HepG2 (cell line): ENCODE measurements at regions of chr3 and their contacts with region 1.

Region 1: DNA sequence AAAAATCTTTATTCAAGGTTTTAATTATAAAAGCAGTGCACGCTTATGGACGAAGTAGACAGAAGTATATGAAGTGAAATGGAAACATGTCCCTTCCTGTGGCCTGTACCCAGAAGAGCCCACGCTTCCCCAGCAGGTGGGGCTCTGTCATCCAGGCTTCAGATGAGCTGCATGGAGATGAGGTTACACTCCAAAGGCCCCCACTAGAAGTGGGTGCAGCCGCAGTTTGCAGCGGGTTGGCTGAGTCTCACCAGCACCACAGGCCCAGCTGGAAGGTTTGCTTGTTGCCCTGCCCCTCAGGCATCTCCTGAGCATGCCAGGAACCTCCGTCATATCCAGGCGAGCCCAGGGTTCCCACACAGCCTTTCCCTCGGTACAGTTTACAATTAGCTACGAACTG is 33.1 kb downstream of the PRR20G start:
- DNase-seq: peak; percentile 16
- ATAC-seq: peak; percentile 95
- H3K4me3 ChIP-seq: no peak overlapping the region
- H3K27ac ChIP-seq: no peak overlapping the region
- H3K4me1 ChIP-seq: no peaks in the 10 kb centered on the region
- H3K27me3 ChIP-seq: peaks cover 3 to 21% of the 10 kb centered on the region in 2 experiments; a peak in 3 of 5 replicates
- CTCF ChIP-seq: peak; percentile 72
- EP300 ChIP-seq: no peak
- POLR2A ChIP-seq: no peak
- RAD21 ChIP-seq: peak; percentile 39; the same call in 1 of the 2 replicates

Region 2: DNA sequence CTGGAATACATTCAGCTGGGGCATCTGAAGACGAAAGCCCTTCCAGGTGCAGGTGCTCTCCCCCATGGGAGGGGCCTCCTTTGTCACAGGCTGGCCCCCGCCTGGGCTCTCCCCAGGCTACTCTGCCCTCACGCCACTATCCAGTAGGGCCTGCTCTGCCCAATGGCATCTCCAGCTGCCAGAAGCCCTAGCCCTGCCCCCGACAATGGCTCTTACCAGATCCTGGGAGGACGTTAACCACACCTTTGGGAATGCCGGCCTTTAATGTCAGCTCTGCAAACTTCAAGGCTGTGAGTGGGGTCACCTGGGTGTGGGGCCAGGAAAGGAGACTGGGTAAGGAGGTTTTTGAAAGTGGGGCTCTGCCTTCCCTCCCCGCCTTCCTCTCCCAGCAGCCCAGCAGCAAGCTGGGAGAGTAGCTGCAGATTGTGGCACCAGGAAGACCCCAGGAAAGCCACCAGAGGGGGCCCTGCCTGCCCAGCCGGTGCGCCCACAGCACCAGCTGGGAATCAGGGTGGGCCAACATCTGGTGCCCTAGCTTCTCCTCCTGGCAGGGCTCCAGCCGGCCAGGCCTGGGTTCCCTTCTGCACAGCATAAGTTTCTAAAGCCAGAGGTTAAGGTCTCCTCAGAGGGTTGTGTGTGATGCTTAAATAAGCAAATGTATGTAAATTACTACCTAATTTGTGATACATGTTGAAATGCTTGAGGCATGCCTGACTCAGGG is 1130.4 kb before region 1 on chr3:
- CTCF ChIA-PET with region 1: no interaction called
- POLR2A ChIA-PET with region 1: no interaction called
- in situ Hi-C with region 1: no loop called
- intact Hi-C with region 1: no loop called
- DNase-seq: no peak
- ATAC-seq: no peak
- H3K4me3 ChIP-seq: no peak overlapping the region
- H3K27ac ChIP-seq: no peak overlapping the region
- H3K4me1 ChIP-seq: peaks cover 10% of the 10 kb centered on the region
- H3K27me3 ChIP-seq: no peaks in the 10 kb centered on the region
- CTCF ChIP-seq: no peak
- EP300 ChIP-seq: no peak
- POLR2A ChIP-seq: no peak
- RAD21 ChIP-seq: no peak

Region 3: GRCh38 chr3:127226946-127227842 is 27.5 kb before region 1 on chr3:
- CTCF ChIA-PET with region 1: no interaction called
- POLR2A ChIA-PET with region 1: no interaction called
- in situ Hi-C with region 1: no loop called
- intact Hi-C with region 1: no loop called
- DNase-seq: peak; percentile 7
- ATAC-seq: peak; percentile 75
- H3K4me3 ChIP-seq: peak overlapping the region in 1 of 3 experiments; percentile 1; a peak in 1 of 6 replicates
- H3K27ac ChIP-seq: no peak overlapping the region
- H3K4me1 ChIP-seq: peaks cover 13% of the 10 kb centered on the region; the same call in 1 of the 2 replicates
- H3K27me3 ChIP-seq: peaks cover under 1 to 6% of the 10 kb centered on the region in 2 experiments; a peak in 2 of 5 replicates
- CTCF ChIP-seq: no peak
- EP300 ChIP-seq: no peak
- POLR2A ChIP-seq: no peak
- RAD21 ChIP-seq: no peak

Region 4: DNA sequence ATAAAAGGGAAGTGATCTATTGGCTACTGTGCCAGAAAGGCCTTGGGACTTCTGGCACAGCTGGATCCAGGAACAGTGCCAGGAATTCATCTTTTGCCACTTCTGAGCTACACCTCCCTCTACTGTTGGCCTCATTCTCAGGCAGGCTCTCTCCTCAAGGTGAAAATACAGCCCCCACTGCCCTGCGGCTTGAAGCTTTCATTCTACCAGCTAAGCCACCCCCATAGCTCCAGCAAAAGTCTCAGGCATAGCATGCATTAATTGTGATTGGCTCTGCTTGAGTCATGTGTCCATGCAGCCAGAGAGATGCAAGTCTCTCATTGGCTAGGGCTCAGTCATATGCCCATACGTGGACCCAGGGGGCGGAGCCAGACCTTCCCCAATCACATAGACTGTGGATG is 193.4 kb after region 1 on chr3:
- CTCF ChIA-PET with region 1: no interaction called
- POLR2A ChIA-PET with region 1: no interaction called
- in situ Hi-C with region 1: loop called (anchors 10 kb)
- intact Hi-C with region 1: loop called (anchors 2 kb)
- DNase-seq: no peak
- ATAC-seq: no peak
- H3K4me3 ChIP-seq: no peak overlapping the region
- H3K27ac ChIP-seq: no peak overlapping the region
- H3K4me1 ChIP-seq: no peaks in the 10 kb centered on the region
- H3K27me3 ChIP-seq: peaks cover 0 to 24% of the 10 kb centered on the region in 2 experiments; a peak in 3 of 5 replicates
- CTCF ChIP-seq: no peak
- EP300 ChIP-seq: no peak
- POLR2A ChIP-seq: no peak
- RAD21 ChIP-seq: no peak